Activated CD4-positive, alpha-beta T cell treated with anti-CD3 and anti-CD28 coated beads, Interleukin-2, amount 10 ng/mL, durations not matched to agents 24 days and 14 days (primary cell): ENCODE measurements at regions of chr3 and their contacts with region 1.

Region 1: GRCh38 chr3:48151058-48151806 is 37.0 kb downstream of the CDC25A start:
- DNase-seq: peak; percentile 90
- H3K4me3 Mint-ChIP-seq: no peak overlapping the region
- H3K27ac Mint-ChIP-seq: no peak overlapping the region
- H3K4me1 Mint-ChIP-seq: peaks cover 4% of the 10 kb centered on the region
- H3K27me3 Mint-ChIP-seq: no peaks in the 10 kb centered on the region

Region 2: GRCh38 chr3:47522082-47522987 is 628.9 kb before region 1 on chr3:
- intact Hi-C with region 1: loop called (anchors 10 kb)
- DNase-seq: peak; percentile 93
- H3K4me3 Mint-ChIP-seq: no peak overlapping the region
- H3K27ac Mint-ChIP-seq: peak overlapping the region; percentile 41
- H3K4me1 Mint-ChIP-seq: peaks cover 4% of the 10 kb centered on the region
- H3K27me3 Mint-ChIP-seq: no peaks in the 10 kb centered on the region

Region 3: GRCh38 chr3:47836986-47837385 is 314.2 kb before region 1 on chr3:
- intact Hi-C with region 1: loop called (anchors 1 kb)
- DNase-seq: no peak
- H3K4me3 Mint-ChIP-seq: no peak overlapping the region
- H3K27ac Mint-ChIP-seq: peak overlapping the region; percentile 40
- H3K4me1 Mint-ChIP-seq: peaks cover 5% of the 10 kb centered on the region
- H3K27me3 Mint-ChIP-seq: no peaks in the 10 kb centered on the region

Region 4: DNA sequence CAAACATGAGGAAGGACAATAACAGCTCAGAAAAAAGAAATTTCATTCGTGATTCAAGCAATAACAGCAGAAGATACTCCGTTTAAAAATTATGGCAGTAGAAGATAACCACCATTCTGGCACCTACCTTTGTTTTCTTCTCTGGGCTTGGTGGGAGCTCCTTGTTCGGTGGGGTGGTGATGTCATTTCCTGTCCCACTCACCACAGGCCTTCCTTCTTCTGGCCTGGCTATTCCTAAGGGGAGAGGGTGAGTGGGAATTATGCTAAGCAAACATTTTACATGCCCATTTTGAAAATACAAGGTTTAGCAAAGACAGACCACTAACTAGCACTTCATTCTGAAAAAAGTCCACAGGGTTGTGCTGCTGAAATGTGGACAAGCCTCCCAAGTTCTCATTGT is 273.9 kb before region 1 on chr3:
- intact Hi-C with region 1: loop called (anchors 10 kb)
- DNase-seq: no peak
- H3K4me3 Mint-ChIP-seq: no peak overlapping the region
- H3K27ac Mint-ChIP-seq: no peak overlapping the region
- H3K4me1 Mint-ChIP-seq: peaks cover 10% of the 10 kb centered on the region
- H3K27me3 Mint-ChIP-seq: no peaks in the 10 kb centered on the region

Region 5: DNA sequence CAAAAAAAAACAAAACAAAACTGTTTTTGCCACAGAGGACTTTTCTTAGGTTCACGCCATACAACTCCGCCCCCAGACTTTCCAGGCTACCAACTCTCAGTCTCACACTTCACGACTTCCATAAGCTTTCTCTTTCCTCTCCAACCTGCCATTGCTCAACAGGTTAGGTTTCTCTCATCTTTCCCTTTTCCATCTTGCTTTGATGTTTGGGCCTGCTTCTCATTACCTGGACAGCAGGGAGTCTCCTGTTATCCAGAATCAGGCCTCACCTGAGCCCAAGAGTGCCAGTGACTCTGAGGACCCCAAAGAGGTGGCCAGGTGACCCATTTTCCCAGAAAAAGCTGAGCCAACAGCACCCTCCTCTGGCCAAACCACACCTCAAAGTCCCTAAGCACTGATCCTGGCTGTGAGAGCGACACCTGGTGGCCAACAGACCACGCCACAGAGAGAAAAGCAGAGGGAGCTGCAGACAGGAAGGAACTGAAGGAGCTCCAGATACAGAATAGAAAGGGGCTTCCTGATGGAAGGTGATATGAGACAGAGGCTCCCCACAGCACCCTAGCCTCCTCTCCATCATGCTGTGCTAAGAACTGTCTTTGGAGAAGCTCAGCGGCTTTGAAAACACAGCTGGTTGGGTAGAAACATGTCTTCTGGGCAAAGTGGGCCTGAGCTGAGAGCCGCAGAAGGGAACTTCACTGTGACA is 284.7 kb after region 1 on chr3:
- intact Hi-C with region 1: no loop called
- DNase-seq: peak; percentile 95
- H3K4me3 Mint-ChIP-seq: no peak overlapping the region
- H3K27ac Mint-ChIP-seq: no peak overlapping the region
- H3K4me1 Mint-ChIP-seq: peaks cover 31% of the 10 kb centered on the region
- H3K27me3 Mint-ChIP-seq: no peaks in the 10 kb centered on the region